ENCODE measurements at regions of chr7 and their contacts with region 1.

Region 1: DNA sequence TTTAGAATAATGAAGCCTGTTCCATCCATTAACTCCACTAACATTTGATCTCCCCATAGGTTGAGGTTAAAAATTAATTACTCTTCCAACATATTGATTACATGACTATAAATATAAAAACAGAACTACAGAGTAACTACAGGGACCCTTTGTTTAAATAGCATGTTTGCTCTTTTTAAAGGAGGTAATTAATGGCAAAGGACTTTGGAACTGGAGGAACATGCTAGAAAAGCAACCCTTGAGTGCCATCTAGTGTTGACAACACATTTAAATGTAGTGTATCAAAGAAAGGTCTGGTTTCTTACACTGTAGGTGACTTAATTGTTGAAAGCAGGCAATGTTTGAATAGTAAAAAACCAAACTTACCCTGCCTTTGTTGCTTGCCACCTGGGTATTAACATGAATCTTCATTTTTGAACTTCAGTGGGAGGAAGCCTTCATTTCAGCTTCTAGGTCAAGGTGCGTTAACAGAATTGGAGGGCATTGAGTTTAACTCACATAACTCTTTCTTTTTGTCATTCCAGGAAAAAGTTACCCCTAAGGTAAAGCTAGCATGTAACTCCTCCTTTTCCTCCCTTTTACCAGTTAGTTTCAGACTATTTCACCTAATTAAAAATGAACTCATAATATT is 52.6 kb upstream of the CAPZA2 start:
- DNase-seq: no peak
- ATAC-seq: peak; percentile 64 to 79 (median 71)
- H3K4me3 ChIP-seq: peak overlapping the region; percentile 33
- H3K27ac ChIP-seq: peak overlapping the region; percentile 79
- H3K4me1 ChIP-seq: peaks cover 25% of the 10 kb centered on the region
- H3K27me3 ChIP-seq: no peaks in the 10 kb centered on the region
- CTCF ChIP-seq: peak; percentile 78

Region 2: DNA sequence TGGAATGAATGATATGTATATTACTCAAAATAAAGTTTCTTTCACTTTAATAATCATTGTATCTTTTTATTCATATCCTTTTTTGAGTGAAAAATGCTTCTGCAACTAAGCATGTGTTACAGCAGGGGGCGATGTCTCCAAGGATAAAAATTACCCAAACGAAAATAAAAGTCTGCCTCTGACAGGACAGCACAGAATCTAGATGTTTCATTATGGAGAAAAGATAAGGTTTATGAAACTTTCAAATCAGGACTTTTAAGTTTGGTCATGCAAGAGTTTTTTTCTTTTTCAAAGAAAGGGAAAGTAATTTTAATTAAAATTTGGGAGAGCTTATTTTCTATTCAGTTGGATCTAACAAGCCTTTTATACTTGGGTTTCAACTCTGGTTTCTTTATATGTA is 551.0 kb before region 1 on chr7:
- intact Hi-C with region 1: loop called (anchors 10 kb)
- DNase-seq: no peak
- ATAC-seq: peak; percentile 57 to 89 (median 70)
- H3K4me3 ChIP-seq: no peak overlapping the region
- H3K27ac ChIP-seq: no peak overlapping the region
- H3K4me1 ChIP-seq: peaks cover 6% of the 10 kb centered on the region
- H3K27me3 ChIP-seq: no peaks in the 10 kb centered on the region
- CTCF ChIP-seq: peak; percentile 91

Region 3: DNA sequence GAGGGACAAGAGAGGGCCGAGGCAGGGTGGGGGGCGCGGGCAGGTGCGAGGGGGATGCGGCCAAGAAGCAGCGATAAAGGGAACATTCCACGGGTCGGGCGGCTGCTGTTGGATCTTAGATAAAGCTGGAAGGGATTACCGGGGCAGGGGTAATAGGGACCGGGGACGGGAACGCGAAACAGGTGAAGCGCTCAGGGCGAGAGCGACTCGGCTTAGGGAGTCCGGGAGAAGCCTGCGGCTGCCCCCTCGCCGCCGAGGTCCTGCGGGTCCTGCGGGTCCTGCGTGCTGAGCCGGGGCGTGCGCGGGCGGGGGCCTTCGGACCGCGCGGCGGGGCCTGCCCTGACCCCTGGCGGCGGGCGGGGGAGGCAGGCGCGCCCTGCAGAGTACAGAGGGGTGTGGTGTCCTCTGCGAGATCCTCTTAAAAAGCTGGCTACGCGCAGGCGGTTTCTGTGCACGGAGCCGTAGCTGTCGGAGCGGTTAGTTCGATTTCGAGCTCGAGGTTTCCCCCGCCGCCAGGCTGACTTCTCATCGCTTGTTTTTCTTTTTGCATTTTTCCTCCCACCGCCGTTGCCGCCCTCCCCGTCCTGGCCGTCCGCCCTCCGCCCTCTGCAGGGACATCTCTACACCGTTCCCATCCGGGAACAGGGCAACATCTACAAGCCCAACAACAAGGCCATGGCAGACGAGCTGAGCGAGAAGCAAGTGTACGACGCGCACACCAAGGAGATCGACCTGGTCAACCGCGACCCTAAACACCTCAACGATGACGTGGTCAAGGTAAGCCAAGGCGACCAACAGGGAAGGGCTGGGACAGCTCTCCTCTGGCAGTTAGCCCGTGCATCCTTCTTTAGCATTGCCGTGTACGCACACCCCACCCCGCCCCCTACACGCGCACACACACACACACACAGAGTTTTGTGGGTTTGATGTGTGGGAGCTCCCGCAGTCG is 283.6 kb before region 1 on chr7:
- intact Hi-C with region 1: loop called in 1 of 2 experiments (anchors 5 kb)
- DNase-seq: peak; percentile 81 to 84
- ATAC-seq: peak; percentile 91 to 92 (median 92)
- H3K4me3 ChIP-seq: peak overlapping the region; percentile 80
- H3K27ac ChIP-seq: peak overlapping the region; percentile 77
- H3K4me1 ChIP-seq: no peaks in the 10 kb centered on the region
- H3K27me3 ChIP-seq: no peaks in the 10 kb centered on the region
- CTCF ChIP-seq: peak; percentile 89

Region 4: DNA sequence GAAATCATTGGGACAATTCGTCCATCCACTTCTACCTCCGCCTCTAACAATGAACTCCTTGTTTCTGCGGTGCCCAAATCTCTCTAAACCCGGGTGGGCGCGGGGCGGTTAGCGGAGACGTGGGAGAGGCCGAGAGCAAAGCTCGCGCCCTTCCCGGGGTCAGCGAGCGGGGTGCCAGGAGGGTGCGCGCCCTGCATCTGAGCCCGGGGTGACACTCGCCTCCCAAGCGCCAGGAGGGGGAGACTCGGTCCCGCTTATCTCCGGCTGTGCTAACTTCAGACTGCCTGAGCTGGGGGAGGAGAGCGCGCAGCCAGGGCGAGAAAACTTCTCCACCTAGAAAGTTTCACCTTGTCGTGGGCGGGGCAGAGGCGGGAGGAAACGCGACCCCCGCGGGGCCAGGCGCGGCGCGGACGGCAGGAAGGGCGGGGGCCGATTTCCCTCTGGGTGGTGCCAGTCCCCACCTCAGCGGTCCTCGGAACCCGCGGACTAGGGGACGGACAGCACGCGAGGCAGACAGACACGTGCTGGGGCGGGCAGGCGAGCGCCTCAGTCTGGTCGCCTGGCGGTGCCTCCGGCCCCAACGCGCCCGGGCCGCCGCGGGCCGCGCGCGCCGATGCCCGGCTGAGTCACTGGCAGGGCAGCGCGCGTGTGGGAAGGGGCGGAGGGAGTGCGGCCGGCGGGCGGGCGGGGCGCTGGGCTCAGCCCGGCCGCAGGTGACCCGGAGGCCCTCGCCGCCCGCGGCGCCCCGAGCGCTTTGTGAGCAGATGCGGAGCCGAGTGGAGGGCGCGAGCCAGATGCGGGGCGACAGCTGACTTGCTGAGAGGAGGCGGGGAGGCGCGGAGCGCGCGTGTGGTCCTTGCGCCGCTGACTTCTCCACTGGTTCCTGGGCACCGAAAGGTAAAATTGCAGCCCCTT is 137.8 kb before region 1 on chr7 and contains the start of gene MET:
- intact Hi-C with region 1: loop called (anchors 2 kb)
- DNase-seq: peak; percentile 83 to 91
- ATAC-seq: peak; percentile 87 to 95 (median 90)
- H3K4me3 ChIP-seq: peak within 1 kb of the TSS; percentile 81
- H3K27ac ChIP-seq: peak within 1 kb of the TSS; percentile 93
- H3K4me1 ChIP-seq: peaks cover 33% of the 10 kb centered on the region
- H3K27me3 ChIP-seq: no peaks in the 10 kb centered on the region
- CTCF ChIP-seq: peak; percentile 57
- total RNA-seq, gene MET: 17.8 to 84.1 (median 29.3) TPM

Region 5: GRCh38 chr7:117169907-117170306 is 360.2 kb after region 1 on chr7:
- intact Hi-C with region 1: no loop called
- DNase-seq: no peak
- ATAC-seq: no peak
- H3K4me3 ChIP-seq: no peak overlapping the region
- H3K27ac ChIP-seq: no peak overlapping the region
- H3K4me1 ChIP-seq: peaks cover 4% of the 10 kb centered on the region
- H3K27me3 ChIP-seq: no peaks in the 10 kb centered on the region
- CTCF ChIP-seq: no peak

Region 6: GRCh38 chr7:117230276-117231046 is 420.7 kb after region 1 on chr7:
- intact Hi-C with region 1: no loop called
- DNase-seq: no peak
- ATAC-seq: no peak
- H3K4me3 ChIP-seq: no peak overlapping the region
- H3K27ac ChIP-seq: no peak overlapping the region
- H3K4me1 ChIP-seq: no peaks in the 10 kb centered on the region
- H3K27me3 ChIP-seq: no peaks in the 10 kb centered on the region
- CTCF ChIP-seq: no peak

Measured in psoas muscle (tissue), 8 donors.